ENCODE measurements at regions of chr5 and their contacts with region 1.

Region 1: DNA sequence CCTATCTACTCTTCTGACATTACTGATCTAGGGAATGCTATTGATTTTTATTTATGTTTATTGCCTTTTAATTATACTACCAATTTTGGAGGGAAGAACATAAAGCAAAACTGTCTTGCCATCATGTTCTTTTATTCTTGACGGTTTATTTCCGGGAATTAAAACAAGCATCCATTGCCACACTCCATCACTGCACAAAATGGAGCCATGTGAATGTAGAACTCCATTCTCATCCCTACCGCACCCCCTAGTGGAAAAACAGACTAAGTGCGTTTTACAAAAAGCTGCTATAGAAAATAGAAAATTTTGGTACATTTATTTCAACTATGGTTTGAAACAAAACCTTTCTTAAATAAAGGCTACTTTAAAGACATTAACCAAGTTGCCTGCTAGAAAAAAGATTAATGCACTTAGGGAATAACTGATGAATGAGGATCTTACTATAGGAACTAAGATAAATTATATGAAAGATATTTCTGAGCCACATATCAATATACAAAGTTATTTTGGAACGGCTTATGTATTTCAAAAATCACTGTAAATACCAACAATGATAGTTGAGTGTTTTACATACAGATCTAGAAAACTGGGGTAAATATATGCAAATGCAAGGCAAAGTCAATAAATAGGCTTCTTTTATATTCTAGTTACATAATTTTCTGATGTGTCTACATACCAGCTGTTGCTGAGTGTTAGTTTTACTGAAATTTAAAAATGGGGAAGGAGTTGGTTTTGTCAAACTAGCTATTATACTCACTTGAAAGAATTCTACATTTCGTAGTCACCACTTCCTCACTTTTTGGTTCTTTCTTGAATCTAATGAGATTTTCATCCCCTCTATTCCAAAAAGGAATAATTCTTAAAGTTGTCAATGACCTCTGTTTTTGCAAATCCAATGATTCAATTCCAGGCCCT is 26.5 kb downstream of the OXCT1 start:
- DNase-seq: no peak
- ATAC-seq: peak; percentile 89
- H3K4me3 ChIP-seq: no peak overlapping the region
- H3K27ac ChIP-seq: no peak overlapping the region; the same call in 1 of the 2 replicates
- H3K4me1 ChIP-seq: peaks cover 11% of the 10 kb centered on the region
- H3K27me3 ChIP-seq: no peaks in the 10 kb centered on the region
- CTCF ChIP-seq: peak; percentile 68 to 83 (median 73)
- EP300 ChIP-seq: no peak
- POLR2A ChIP-seq: no peak
- RAD21 ChIP-seq: peak; percentile 94

Region 2: DNA sequence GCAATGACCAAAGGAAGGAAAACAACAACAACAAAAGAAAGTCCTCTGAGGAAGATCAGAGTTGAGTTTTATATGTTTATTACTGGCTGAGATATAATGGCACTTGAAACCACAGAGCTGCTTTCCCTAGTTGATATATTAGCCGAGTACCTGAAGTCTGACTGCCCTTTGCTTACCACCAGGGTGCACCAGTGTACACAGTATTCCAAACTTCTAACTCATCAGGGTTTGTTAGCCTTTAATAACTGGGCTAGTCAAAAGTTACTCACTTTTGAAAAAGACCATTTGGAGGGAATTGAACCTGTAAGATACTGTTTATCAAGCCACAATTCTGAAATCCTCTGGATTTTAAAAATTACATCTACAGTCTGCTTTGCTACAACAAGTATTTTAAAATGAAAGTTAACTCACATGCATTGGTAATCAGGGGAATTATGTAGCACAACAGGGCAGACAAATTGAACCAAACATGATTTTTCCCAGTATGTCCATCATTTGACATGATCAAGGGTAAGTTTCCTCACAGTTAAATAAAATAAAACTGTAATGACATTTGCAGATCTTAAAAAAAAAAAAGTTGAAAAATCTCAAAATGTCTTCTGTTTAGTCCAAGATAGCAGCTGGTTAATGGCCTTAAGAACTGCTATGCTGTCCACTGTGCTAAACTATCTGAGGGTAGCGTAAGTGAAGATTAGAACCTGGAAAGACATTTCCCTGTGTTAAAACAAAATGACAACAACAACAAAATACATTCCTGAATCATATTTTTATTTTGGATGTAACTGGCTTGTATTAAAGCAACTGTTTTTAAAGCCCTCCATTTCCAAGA is 573.1 kb before region 1 on chr5:
- CTCF ChIA-PET with region 1: interaction called, 3 read pairs
- POLR2A ChIA-PET with region 1: no interaction called
- RAD21 ChIA-PET with region 1: interaction called, 11 read pairs
- SMC1A ChIA-PET with region 1: interaction called, 3 read pairs
- in situ Hi-C with region 1: loop called (anchors 25 kb)
- intact Hi-C with region 1: loop called (anchors 5 kb)
- DNase-seq: no peak
- ATAC-seq: peak; percentile 90
- H3K4me3 ChIP-seq: no peak overlapping the region
- H3K27ac ChIP-seq: no peak overlapping the region
- H3K4me1 ChIP-seq: no peaks in the 10 kb centered on the region
- H3K27me3 ChIP-seq: no peaks in the 10 kb centered on the region
- CTCF ChIP-seq: peak; percentile 58 to 70 (median 63); a peak in 5 of 6 replicates
- EP300 ChIP-seq: no peak
- POLR2A ChIP-seq: no peak
- RAD21 ChIP-seq: peak; percentile 71

Region 3: GRCh38 chr5:41695920-41696582 is 147.7 kb before region 1 on chr5:
- CTCF ChIA-PET with region 1: interaction called, 34 read pairs
- POLR2A ChIA-PET with region 1: no interaction called
- RAD21 ChIA-PET with region 1: interaction called, 27 read pairs
- SMC1A ChIA-PET with region 1: interaction called, 25 read pairs
- in situ Hi-C with region 1: loop called (anchors 5 kb)
- intact Hi-C with region 1: loop called (anchors 1 kb)
- DNase-seq: no peak
- ATAC-seq: peak; percentile 90
- H3K4me3 ChIP-seq: no peak overlapping the region
- H3K27ac ChIP-seq: no peak overlapping the region
- H3K4me1 ChIP-seq: no peaks in the 10 kb centered on the region
- H3K27me3 ChIP-seq: no peaks in the 10 kb centered on the region
- CTCF ChIP-seq: peak; percentile 51 to 66 (median 57); a peak in 5 of 6 replicates
- EP300 ChIP-seq: no peak
- POLR2A ChIP-seq: no peak
- RAD21 ChIP-seq: peak; percentile 73

Region 4: DNA sequence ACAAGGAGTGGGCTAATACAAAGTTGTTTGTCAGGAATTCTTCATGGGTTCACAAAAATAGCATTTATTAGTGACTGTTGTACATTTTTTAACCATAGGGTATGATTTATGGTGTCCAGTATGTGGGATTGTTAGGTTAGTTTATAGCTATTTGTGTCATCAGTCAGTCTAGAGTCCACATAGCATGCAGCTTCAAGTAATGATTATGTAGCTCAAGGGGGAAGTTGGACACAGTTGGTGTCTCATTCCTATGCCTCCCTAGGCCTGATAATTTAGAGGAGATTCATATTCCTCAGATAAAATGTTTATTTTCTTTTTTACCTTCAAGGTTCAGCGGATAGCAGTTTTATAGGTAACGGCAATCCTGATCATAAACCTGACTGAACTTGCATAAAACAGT is 127.3 kb before region 1 on chr5:
- CTCF ChIA-PET with region 1: interaction called, 47 read pairs
- POLR2A ChIA-PET with region 1: interaction called, 3 read pairs
- RAD21 ChIA-PET with region 1: interaction called, 36 read pairs
- SMC1A ChIA-PET with region 1: interaction called, 57 read pairs
- in situ Hi-C with region 1: no loop called
- intact Hi-C with region 1: no loop called
- DNase-seq: no peak
- ATAC-seq: no peak
- H3K4me3 ChIP-seq: no peak overlapping the region
- H3K27ac ChIP-seq: no peak overlapping the region
- H3K4me1 ChIP-seq: no peaks in the 10 kb centered on the region
- H3K27me3 ChIP-seq: no peaks in the 10 kb centered on the region
- CTCF ChIP-seq: no peak
- EP300 ChIP-seq: no peak
- POLR2A ChIP-seq: no peak
- RAD21 ChIP-seq: no peak

Region 5: GRCh38 chr5:41754857-41755256 is 88.9 kb before region 1 on chr5:
- CTCF ChIA-PET with region 1: interaction called, 38 read pairs
- POLR2A ChIA-PET with region 1: interaction called, 5 read pairs
- RAD21 ChIA-PET with region 1: interaction called, 7 read pairs
- SMC1A ChIA-PET with region 1: interaction called, 11 read pairs
- in situ Hi-C with region 1: no loop called
- intact Hi-C with region 1: loop called (anchors 5 kb)
- DNase-seq: no peak
- ATAC-seq: peak; percentile 72
- H3K4me3 ChIP-seq: no peak overlapping the region
- H3K27ac ChIP-seq: no peak overlapping the region; the same call in 1 of the 2 replicates
- H3K4me1 ChIP-seq: no peaks in the 10 kb centered on the region; the same call in 1 of the 2 replicates
- H3K27me3 ChIP-seq: no peaks in the 10 kb centered on the region
- CTCF ChIP-seq: peak; percentile 10 to 46 (median 24); a peak in 4 of 6 replicates
- EP300 ChIP-seq: no peak
- POLR2A ChIP-seq: no peak
- RAD21 ChIP-seq: no peak

Region 6: DNA sequence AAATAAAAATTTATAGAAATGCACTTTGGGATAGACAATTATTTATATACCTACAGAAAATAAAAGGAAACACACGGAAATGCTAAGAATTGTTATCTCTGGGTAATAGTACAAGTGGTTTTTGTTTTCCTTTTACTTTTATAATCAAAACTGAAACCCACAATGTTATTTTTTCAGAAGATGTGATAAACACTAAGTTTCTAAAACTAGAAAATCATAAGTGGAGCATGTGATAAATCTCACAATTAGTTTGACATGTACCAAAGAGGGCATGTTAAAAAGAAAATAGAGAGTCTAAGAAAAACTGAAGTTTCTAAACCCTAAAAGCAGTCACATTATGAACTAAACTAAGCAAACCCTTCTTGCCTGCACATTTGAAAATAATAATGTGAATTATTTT is 34.6 kb before region 1 on chr5:
- CTCF ChIA-PET with region 1: interaction called, 7 read pairs
- POLR2A ChIA-PET with region 1: interaction called, 5 read pairs
- RAD21 ChIA-PET with region 1: interaction called, 3 read pairs
- SMC1A ChIA-PET with region 1: interaction called, 12 read pairs
- in situ Hi-C with region 1: no loop called
- intact Hi-C with region 1: no loop called
- DNase-seq: peak; percentile 11
- ATAC-seq: peak; percentile 64
- H3K4me3 ChIP-seq: peak overlapping the region; percentile 13; the same call in 1 of the 2 replicates
- H3K27ac ChIP-seq: 0 out of 2 replicates have a peak overlapping the region, but pooled peaks have one; percentile 8
- H3K4me1 ChIP-seq: no peaks in the 10 kb centered on the region
- H3K27me3 ChIP-seq: no peaks in the 10 kb centered on the region
- CTCF ChIP-seq: no peak
- EP300 ChIP-seq: no peak
- POLR2A ChIP-seq: no peak
- RAD21 ChIP-seq: no peak

Region 7: GRCh38 chr5:41978676-41979075 is 135.0 kb after region 1 on chr5:
- CTCF ChIA-PET with region 1: no interaction called
- POLR2A ChIA-PET with region 1: no interaction called
- RAD21 ChIA-PET with region 1: no interaction called
- SMC1A ChIA-PET with region 1: no interaction called
- in situ Hi-C with region 1: no loop called
- intact Hi-C with region 1: no loop called
- DNase-seq: no peak
- ATAC-seq: no peak
- H3K4me3 ChIP-seq: no peak overlapping the region
- H3K27ac ChIP-seq: no peak overlapping the region
- H3K4me1 ChIP-seq: no peaks in the 10 kb centered on the region
- H3K27me3 ChIP-seq: no peaks in the 10 kb centered on the region; a peak in 1 of 4 replicates
- CTCF ChIP-seq: no peak
- EP300 ChIP-seq: no peak
- POLR2A ChIP-seq: no peak
- RAD21 ChIP-seq: no peak